Colonic mucosa (tissue), 4 donors: ENCODE measurements at regions of chr11 and their contacts with region 1.

Region 1: GRCh38 chr11:1515082-1516060 is 28.8 kb upstream of the MOB2 start:
- DNase-seq: peak; percentile 80
- H3K4me3 ChIP-seq: no peak overlapping the region
- H3K27ac ChIP-seq: no peak overlapping the region
- H3K4me1 ChIP-seq: peaks cover 5% of the 10 kb centered on the region
- H3K27me3 ChIP-seq: no peaks in the 10 kb centered on the region
- CTCF ChIP-seq: peak; percentile 94

Region 2: DNA sequence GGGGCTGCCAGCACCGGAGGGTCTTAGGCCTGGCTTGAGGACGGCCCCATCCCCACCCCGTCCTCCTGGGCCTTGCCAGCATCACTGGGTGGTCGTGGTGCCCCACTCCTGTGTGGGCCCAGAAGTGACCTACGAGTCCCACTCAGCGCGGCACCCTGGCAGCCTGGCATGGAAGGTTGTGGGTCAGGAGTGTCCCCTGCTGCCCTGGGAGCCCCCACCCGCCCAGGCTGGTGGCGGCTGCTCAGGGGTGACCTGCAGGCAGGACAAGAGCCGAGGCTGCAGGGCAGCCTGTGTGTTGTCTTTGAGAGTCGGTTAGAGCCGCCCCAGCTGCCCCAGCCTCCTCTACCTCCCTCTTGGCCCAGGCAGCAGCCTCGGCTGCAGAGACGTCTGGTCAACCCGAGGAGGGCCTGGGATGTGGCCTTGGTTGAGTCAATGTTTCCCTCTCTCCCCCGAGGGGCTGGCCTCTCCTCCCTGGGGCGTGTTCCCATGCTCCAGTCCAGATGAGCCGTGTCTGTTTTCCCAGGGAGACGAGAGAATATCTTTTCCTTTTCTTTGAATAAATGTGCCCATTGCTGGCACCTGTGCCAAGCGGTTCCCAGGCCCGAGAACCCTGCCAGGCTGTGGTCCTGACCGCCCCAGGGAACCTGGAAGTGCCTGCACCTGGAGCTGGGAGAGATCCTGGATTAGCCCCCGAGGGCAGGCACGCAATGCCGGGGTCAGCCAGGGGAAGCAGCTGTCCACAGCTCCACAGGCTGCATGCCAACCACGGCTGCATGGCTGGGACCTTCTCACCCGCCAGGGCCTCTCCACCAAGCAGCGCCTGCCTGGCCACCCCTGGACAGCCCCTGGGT is 393.3 kb before region 1 on chr11:
- intact Hi-C with region 1: loop called (anchors 10 kb)
- DNase-seq: no peak
- H3K4me3 ChIP-seq: no peak overlapping the region
- H3K27ac ChIP-seq: no peak overlapping the region
- H3K4me1 ChIP-seq: no peaks in the 10 kb centered on the region
- H3K27me3 ChIP-seq: no peaks in the 10 kb centered on the region
- CTCF ChIP-seq: no peak

Region 3: DNA sequence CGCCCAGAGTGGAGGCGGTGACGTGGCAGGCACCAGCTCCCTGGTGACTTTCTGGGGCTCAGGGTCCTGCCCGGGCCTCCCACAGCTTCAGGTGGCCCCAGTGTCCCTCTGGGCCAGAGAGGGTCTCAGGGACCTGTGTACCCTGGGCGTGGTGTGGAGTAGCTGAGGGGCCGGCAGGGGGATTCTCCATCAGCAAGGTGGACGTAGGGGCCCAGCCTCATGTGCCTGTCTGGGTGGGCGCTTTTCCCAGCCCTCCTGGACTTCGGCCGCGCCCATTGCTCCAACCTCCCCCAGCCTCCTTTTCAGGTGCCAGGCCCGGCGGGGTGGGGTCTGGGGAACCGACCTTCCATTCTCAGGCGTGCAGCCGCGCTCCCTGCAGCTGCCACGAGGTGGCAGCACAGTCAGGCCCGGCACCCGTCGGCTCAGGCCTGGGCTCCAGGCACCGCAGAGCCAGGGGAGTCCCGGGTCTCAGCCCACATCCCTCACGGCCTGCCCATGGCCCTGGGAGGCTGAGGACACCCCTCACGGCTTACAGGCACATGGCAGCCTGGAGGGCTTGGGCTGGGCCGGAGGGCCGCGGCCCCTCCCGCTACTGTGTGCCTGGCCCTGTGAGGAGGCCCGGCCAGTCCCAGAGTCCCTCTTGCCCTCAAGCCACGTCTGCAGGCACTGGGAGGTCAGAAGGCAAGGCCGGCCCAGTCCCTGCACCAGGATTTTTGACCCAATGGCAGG is 312.4 kb before region 1 on chr11:
- intact Hi-C with region 1: loop called (anchors 10 kb)
- DNase-seq: peak; percentile 72
- H3K4me3 ChIP-seq: no peak overlapping the region
- H3K27ac ChIP-seq: no peak overlapping the region
- H3K4me1 ChIP-seq: peaks cover 12% of the 10 kb centered on the region
- H3K27me3 ChIP-seq: peaks cover 13% of the 10 kb centered on the region
- CTCF ChIP-seq: peak; percentile 93

Region 4: GRCh38 chr11:1298695-1299492 is 216.5 kb before region 1 on chr11:
- intact Hi-C with region 1: loop called (anchors 10 kb)
- DNase-seq: peak; percentile 88
- H3K4me3 ChIP-seq: no peak overlapping the region
- H3K27ac ChIP-seq: no peak overlapping the region
- H3K4me1 ChIP-seq: peaks cover 23% of the 10 kb centered on the region
- H3K27me3 ChIP-seq: no peaks in the 10 kb centered on the region
- CTCF ChIP-seq: no peak

Region 5: GRCh38 chr11:1369371-1370005 is 145.9 kb before region 1 on chr11:
- intact Hi-C with region 1: no loop called
- DNase-seq: no peak
- H3K4me3 ChIP-seq: no peak overlapping the region
- H3K27ac ChIP-seq: no peak overlapping the region
- H3K4me1 ChIP-seq: no peaks in the 10 kb centered on the region
- H3K27me3 ChIP-seq: no peaks in the 10 kb centered on the region
- CTCF ChIP-seq: no peak

Region 6: GRCh38 chr11:1458340-1459218 is 56.8 kb before region 1 on chr11:
- intact Hi-C with region 1: loop called (anchors 5 kb)
- DNase-seq: peak; percentile 80
- H3K4me3 ChIP-seq: no peak overlapping the region
- H3K27ac ChIP-seq: no peak overlapping the region
- H3K4me1 ChIP-seq: no peaks in the 10 kb centered on the region
- H3K27me3 ChIP-seq: peaks cover 10% of the 10 kb centered on the region
- CTCF ChIP-seq: no peak